ENCODE measurements at regions of chr11 and their contacts with region 1.

Region 1: GRCh38 chr11:130002846-130003716 is 446 bp upstream of the PRDM10 start:
- DNase-seq: peak; percentile 75 to 97 (median 94)
- ATAC-seq: peak; percentile 85
- H3K4me3 ChIP-seq: peak overlapping the region; percentile 76
- H3K4me3 Mint-ChIP-seq: peak overlapping the region; percentile 87 to 100 (median 99)
- H3K27ac ChIP-seq: peak overlapping the region; percentile 98
- H3K27ac Mint-ChIP-seq: peak overlapping the region; percentile 99 to 100 (median 100)
- H3K4me1 ChIP-seq: peaks cover 16 to 22% of the 10 kb centered on the region in 2 donors
- H3K4me1 Mint-ChIP-seq: peaks cover 21 to 48% (median 43%) of the 10 kb centered on the region in 7 donors
- H3K27me3 ChIP-seq: no peaks in the 10 kb centered on the region
- H3K27me3 Mint-ChIP-seq: peaks cover 0 to 8% (median 0%) of the 10 kb centered on the region in 5 donors

Region 2: GRCh38 chr11:129279326-129280026 is 723.6 kb before region 1 on chr11:
- CTCF ChIA-PET with region 1: no interaction called
- POLR2A ChIA-PET with region 1: no interaction called
- intact Hi-C with region 1: loop called (anchors 1 to 5 kb)
- DNase-seq: peak; percentile 70 to 90 (median 82)
- ATAC-seq: peak; percentile 94
- H3K4me3 ChIP-seq: peak overlapping the region; percentile 58
- H3K4me3 Mint-ChIP-seq: peak overlapping the region; percentile 74 to 91 (median 86)
- H3K27ac ChIP-seq: peak overlapping the region; percentile 49
- H3K27ac Mint-ChIP-seq: peak overlapping the region; percentile 69 to 91 (median 80)
- H3K4me1 ChIP-seq: peaks cover 4 to 6% of the 10 kb centered on the region in 2 donors
- H3K4me1 Mint-ChIP-seq: peaks cover 14 to 43% (median 33%) of the 10 kb centered on the region in 7 donors
- H3K27me3 ChIP-seq: peaks cover 0 to 3% of the 10 kb centered on the region in 2 donors
- H3K27me3 Mint-ChIP-seq: peaks cover 8 to 32% (median 17%) of the 10 kb centered on the region in 5 donors

Region 3: GRCh38 chr11:129853518-129854236 is 149.4 kb before region 1 on chr11:
- CTCF ChIA-PET with region 1: no interaction called
- POLR2A ChIA-PET with region 1: interaction called, 9 read pairs
- intact Hi-C with region 1: loop called in 1 of 2 experiments (anchors 1 kb)
- DNase-seq: peak; percentile 34 to 96 (median 93)
- ATAC-seq: peak; percentile 94
- H3K4me3 ChIP-seq: peak overlapping the region; percentile 21
- H3K4me3 Mint-ChIP-seq: peak overlapping the region; percentile 49 to 84 (median 74)
- H3K27ac ChIP-seq: peak overlapping the region; percentile 68
- H3K27ac Mint-ChIP-seq: peak overlapping the region; percentile 94 to 99 (median 98)
- H3K4me1 ChIP-seq: peaks cover 14 to 24% of the 10 kb centered on the region in 2 donors
- H3K4me1 Mint-ChIP-seq: peaks cover 17 to 68% (median 51%) of the 10 kb centered on the region in 7 donors
- H3K27me3 ChIP-seq: no peaks in the 10 kb centered on the region
- H3K27me3 Mint-ChIP-seq: peaks cover 0 to 2% (median 0%) of the 10 kb centered on the region in 5 donors

Region 4: GRCh38 chr11:129992161-129992944 is 10.7 kb before region 1 on chr11:
- CTCF ChIA-PET with region 1: interaction called, 7 read pairs
- POLR2A ChIA-PET with region 1: interaction called, 7 read pairs
- intact Hi-C with region 1: loop called in 1 of 2 experiments (anchors 1 kb)
- DNase-seq: peak in 7 of 9 donors; percentile 9 to 55 (median 33)
- ATAC-seq: peak; percentile 73
- H3K4me3 ChIP-seq: no peak overlapping the region
- H3K4me3 Mint-ChIP-seq: no peak overlapping the region
- H3K27ac ChIP-seq: no peak overlapping the region
- H3K27ac Mint-ChIP-seq: peak overlapping the region in 3 of 9 donors; percentile 32 to 66 (median 36)
- H3K4me1 ChIP-seq: no peaks in the 10 kb centered on the region
- H3K4me1 Mint-ChIP-seq: peaks cover 5 to 26% (median 19%) of the 10 kb centered on the region in 7 donors
- H3K27me3 ChIP-seq: no peaks in the 10 kb centered on the region
- H3K27me3 Mint-ChIP-seq: no peaks in the 10 kb centered on the region

Region 5: DNA sequence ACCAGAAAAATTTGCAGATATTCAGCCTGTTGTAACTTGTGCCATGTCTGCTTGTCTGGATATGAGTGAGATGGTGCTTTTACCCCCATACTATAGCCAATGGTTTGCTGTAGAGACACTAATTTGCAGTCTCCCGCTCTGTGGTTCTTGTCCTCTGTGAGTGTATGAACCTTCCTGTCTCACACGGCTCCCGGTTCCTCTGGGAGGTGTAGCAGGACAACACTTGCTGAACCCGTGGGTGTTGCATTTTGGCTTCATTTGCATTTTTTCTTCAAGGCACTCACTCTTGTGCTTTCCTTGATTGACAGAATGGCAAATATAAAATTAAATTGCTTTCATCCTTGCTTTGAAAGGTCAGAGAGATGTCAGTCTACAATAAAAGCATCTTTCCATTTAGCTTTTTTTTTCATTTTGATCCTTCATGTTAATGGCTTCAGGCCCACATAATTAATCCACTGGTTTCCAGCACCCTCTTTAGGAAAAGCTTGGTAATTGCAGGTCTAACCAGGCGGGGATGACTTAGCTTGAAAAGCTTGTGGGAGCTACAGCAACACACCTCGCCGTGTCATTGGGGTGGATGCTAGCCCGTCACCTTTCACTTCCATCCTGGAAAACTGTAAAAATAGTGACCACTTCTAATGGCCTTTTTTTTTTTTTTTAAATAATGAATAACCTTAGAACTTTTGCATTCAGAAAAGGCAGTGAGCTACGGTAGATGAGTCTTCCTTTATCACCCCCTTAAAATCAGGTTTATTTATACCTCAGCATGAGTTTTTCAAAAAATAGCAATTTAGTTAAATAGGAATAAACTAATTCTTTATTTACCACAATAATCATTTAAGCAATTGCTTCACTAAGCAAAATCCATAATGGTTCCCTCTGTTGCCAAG is 129.1 kb after region 1 on chr11:
- CTCF ChIA-PET with region 1: interaction called, 8 read pairs
- POLR2A ChIA-PET with region 1: interaction called, 7 read pairs
- intact Hi-C with region 1: loop called in 1 of 2 experiments (anchors 1 kb)
- DNase-seq: peak in 8 of 9 donors; percentile 38 to 76 (median 68)
- ATAC-seq: peak; percentile 91
- H3K4me3 ChIP-seq: no peak overlapping the region
- H3K4me3 Mint-ChIP-seq: no peak overlapping the region
- H3K27ac ChIP-seq: no peak overlapping the region
- H3K27ac Mint-ChIP-seq: peak overlapping the region in 1 of 9 donors; percentile 6
- H3K4me1 ChIP-seq: no peaks in the 10 kb centered on the region
- H3K4me1 Mint-ChIP-seq: no peaks in the 10 kb centered on the region
- H3K27me3 ChIP-seq: no peaks in the 10 kb centered on the region
- H3K27me3 Mint-ChIP-seq: no peaks in the 10 kb centered on the region

Region 6: DNA sequence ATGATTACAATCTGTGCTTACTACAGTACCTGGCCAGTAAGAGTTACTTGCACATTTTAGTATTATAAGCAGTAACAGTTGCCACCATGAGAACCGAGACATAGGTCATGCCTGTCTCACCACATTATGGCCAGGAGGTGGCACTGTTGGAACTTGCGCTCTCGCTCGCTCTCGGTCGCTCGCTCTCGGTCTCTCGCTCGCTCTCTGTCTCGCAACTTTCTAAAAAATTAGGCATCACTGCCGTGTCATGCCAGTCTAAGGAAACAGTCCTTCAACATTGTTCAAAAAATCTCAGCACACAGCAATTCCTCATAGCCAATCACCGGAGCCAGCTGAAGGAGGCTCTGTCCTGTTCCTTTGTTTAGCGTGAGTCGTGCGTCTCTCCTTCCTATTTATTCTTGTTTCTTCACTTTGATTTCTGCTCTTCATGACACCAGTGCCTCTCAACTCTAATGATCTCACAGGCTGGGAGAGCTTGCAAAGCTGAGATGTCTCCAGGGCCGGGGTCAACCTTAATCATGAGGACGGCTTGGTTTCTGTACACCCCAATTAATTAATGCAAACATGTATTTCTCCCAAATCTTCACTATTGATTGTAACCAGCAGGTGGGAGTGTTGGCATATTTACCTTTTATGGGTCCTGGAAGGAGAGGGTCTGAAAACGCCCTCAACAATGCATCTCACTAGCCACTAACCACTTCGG is 431.6 kb after region 1 on chr11:
- CTCF ChIA-PET with region 1: no interaction called
- POLR2A ChIA-PET with region 1: no interaction called
- intact Hi-C with region 1: loop called (anchors 5 to 10 kb)
- DNase-seq: peak; percentile 34 to 67 (median 63)
- ATAC-seq: peak; percentile 93
- H3K4me3 ChIP-seq: peak overlapping the region; percentile 87
- H3K4me3 Mint-ChIP-seq: no peak overlapping the region
- H3K27ac ChIP-seq: peak overlapping the region; percentile 45
- H3K27ac Mint-ChIP-seq: no peak overlapping the region
- H3K4me1 ChIP-seq: peaks cover 0 to 8% of the 10 kb centered on the region in 2 donors
- H3K4me1 Mint-ChIP-seq: peaks cover 14 to 28% (median 16%) of the 10 kb centered on the region in 7 donors
- H3K27me3 ChIP-seq: no peaks in the 10 kb centered on the region
- H3K27me3 Mint-ChIP-seq: peaks cover 15 to 32% (median 18%) of the 10 kb centered on the region in 5 donors